ENCODE measurements at regions of chr4 and their contacts with region 1.

Region 1: GRCh38 chr4:109683621-109684253 is 19.5 kb downstream of the CASP6 start:
- DNase-seq: no peak
- H3K4me3 ChIP-seq: no peak overlapping the region
- H3K27ac ChIP-seq: no peak overlapping the region
- H3K4me1 ChIP-seq: no peaks in the 10 kb centered on the region
- H3K27me3 ChIP-seq: no peaks in the 10 kb centered on the region
- CTCF ChIP-seq: no peak
- EP300 ChIP-seq: no peak
- POLR2A ChIP-seq: no peak

Region 2: DNA sequence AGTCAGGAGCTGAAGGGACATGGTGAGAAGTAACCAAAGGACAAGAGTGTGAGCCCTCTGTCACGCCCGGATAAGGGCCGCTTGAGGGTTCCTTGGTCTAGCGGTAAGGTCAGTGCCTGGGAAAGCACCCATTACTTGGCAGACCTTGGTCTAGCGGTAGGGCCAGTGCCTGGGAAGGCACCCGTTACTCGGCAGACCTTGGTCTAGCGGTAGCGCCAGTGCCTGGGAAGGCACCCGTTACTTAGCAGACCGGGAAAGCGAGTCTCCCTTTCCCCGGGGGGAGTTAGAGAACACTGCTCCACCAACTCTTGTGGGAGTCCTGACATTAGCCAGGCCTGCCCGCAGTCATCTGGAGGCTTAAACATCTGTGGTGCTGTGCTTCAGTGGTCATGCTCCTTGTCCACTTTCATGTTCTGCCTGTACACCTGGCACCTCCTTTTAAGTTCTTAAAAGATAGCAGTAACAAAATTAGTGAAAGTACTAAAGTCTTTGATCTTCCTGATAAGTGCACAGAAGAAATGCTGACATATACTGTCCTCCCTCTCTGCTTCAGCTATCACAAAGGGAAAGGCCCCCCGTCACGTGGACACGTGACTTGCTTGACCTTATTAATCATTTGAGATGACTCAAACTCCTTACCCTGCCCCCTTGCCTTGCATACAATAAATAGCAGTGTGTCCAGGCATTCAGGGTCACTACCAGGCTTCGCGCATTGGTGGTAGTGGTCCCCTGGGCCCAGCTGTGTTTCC is 259.5 kb before region 1 on chr4:
- intact Hi-C with region 1: loop called (anchors 10 kb)
- DNase-seq: no peak
- H3K4me3 ChIP-seq: no peak overlapping the region
- H3K27ac ChIP-seq: no peak overlapping the region
- H3K4me1 ChIP-seq: peaks cover 0 to 7% (median 2%) of the 10 kb centered on the region in 4 donors
- H3K27me3 ChIP-seq: no peaks in the 10 kb centered on the region
- CTCF ChIP-seq: no peak
- EP300 ChIP-seq: no peak
- POLR2A ChIP-seq: no peak

Measured in stomach (tissue), 19 donors.